ENCODE measurements at regions of chr2 and their contacts with region 1.

Region 1: DNA sequence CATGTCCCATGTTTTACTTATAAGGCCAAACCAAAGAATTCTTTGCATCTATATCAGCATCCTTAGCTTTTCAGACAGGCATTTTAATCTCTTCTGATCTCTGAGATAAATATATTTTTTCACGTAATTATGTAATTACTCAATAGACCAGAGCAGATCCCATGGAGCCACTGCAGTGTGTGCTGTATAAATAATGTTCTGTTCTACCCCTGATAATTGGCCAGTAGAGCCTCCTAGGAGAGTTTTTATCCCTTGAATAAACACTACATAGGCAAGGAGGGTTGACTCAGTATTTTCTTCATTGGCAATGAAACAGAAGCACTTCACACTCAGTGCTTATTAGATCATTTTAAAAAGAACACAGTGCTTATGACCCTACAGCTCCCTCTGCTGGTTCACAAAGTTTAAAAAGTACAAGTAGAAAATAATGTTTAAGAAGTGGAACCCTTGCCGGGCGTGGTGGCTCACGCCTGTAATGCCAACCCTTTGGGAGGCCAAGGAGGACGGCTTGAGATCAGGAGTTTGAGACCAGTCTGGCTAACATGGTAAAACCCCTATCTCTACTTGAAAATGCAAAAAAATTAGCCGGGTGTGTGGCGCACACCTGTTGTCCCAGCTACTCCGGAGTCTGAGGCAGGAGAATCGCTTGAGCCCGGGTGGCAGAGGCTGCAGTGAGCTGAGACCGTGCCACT is 91.9 kb downstream of the PPP1R1C start:
- DNase-seq: peak; percentile 95
- ATAC-seq: peak; percentile 94
- H3K4me3 ChIP-seq: no peak overlapping the region
- H3K27ac ChIP-seq: peak overlapping the region; percentile 73
- H3K4me1 ChIP-seq: peaks cover 2% of the 10 kb centered on the region; the same call in 1 of the 2 replicates
- H3K27me3 ChIP-seq: no peaks in the 10 kb centered on the region
- CTCF ChIP-seq: peak; percentile 82
- POLR2A ChIP-seq: no peak
- RAD21 ChIP-seq: peak; percentile 87

Region 2: GRCh38 chr2:181738074-181738473 is 339.5 kb before region 1 on chr2:
- CTCF ChIA-PET with region 1: interaction called, 12 read pairs
- POLR2A ChIA-PET with region 1: no interaction called
- dilution Hi-C with region 1: no loop called
- in situ Hi-C with region 1: loop called (anchors 5 kb)
- intact Hi-C with region 1: loop called (anchors 1 kb)
- DNase-seq: peak; percentile 28
- ATAC-seq: no peak
- H3K4me3 ChIP-seq: no peak overlapping the region
- H3K27ac ChIP-seq: no peak overlapping the region
- H3K4me1 ChIP-seq: no peaks in the 10 kb centered on the region; the same call in 1 of the 2 replicates
- H3K27me3 ChIP-seq: no peaks in the 10 kb centered on the region
- CTCF ChIP-seq: peak; percentile 38
- POLR2A ChIP-seq: no peak
- RAD21 ChIP-seq: peak; percentile 40

Region 3: DNA sequence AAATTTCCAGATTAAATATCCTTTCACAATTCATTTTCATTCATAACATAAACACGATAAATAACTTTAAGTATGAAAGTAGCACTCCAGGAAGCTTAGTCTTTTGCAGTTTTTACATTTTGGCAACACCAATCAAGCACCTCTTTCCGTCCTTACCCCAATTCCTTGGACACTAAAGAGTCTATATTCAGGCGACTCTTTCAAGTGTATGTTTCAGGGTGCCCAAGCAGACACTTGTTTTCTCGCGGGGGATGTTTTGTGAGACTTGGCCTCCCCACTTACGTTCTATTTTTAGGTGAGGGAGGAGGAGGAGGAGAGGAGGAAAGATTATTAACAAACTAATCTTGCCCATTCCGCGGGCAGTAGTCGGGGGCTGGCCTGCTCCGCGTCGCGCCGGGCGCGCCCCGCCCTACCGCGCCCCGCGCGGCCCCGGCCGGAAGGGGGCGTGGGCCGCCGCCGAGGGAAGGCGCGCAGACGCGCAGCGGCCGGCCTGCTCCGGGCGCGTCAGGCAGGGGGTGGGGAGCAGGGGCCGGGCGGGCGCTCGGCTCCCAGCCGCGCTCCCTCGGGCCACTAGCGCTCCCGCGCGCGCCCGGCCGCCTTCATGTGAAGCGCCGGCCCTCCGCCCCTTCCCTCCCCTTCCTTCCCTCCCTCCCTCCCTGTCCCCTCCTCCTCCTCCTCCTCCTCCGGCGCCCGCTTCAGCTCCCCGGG is 186.2 kb before region 1 on chr2 and contains the start of gene ITPRID2:
- CTCF ChIA-PET with region 1: no interaction called
- POLR2A ChIA-PET with region 1: no interaction called
- dilution Hi-C with region 1: no loop called
- in situ Hi-C with region 1: no loop called
- intact Hi-C with region 1: loop called (anchors 1 kb)
- DNase-seq: peak; percentile 89
- ATAC-seq: peak; percentile 97
- H3K4me3 ChIP-seq: peak within 1 kb of the TSS; percentile 98
- H3K27ac ChIP-seq: peak within 1 kb of the TSS; percentile 98
- H3K4me1 ChIP-seq: peaks cover 3% of the 10 kb centered on the region; the same call in 1 of the 2 replicates
- H3K27me3 ChIP-seq: no peaks in the 10 kb centered on the region
- CTCF ChIP-seq: peak; percentile 44; the same call in 1 of the 2 replicates
- POLR2A ChIP-seq: no peak
- RAD21 ChIP-seq: no peak
- total RNA-seq, gene ITPRID2: 168 and 187 TPM in 2 replicates

Region 4: DNA sequence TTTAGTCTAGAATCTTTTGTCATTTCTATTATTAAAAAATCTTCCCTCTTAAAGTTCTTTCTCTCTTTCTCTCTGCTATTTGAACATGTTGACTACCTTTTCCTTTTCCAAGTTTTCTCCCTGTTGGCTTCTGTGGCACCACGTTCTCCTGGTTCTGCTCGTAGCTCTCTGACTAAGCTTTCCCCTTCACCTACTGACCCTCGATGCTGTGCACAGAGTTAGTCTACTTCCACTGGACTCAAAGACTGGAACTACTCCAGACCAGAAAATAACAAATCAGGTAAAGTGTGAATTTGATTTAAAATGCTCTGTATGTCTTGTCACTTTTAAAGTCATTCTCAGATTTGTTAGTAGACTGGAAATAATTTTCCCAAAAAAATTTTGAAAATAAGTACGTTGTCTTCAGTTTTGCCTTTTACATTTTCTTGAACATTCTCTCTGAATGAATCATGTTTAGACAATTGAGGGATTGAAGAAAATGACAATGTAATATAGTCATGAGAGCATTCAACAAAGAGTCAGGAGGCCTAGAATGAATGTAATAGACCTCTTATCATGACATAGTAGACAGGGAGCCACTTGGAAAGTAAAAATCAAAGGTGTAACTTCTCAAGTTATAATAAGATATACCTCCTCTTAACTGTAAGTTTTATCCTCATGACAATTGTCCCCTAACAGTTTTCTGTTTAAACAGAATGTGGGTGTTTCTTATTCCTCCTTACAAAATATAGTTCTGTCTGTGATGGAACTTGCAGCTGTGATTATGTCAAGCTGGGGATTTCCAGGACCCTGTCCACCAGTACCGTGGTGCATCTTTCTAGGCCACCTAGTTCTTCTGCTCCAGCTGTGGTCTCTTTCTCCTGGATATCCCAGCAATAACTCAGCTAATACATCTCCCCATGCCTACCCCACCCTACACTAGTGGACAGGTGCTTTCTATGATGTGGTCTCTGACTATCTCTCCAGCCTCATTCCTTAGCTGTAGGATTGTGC is 160.6 kb before region 1 on chr2:
- CTCF ChIA-PET with region 1: interaction called, 3 read pairs
- POLR2A ChIA-PET with region 1: no interaction called
- dilution Hi-C with region 1: no loop called
- in situ Hi-C with region 1: no loop called
- intact Hi-C with region 1: loop called (anchors 5 kb)
- DNase-seq: peak; percentile 69
- ATAC-seq: peak; percentile 54
- H3K4me3 ChIP-seq: no peak overlapping the region
- H3K27ac ChIP-seq: peak overlapping the region; percentile 6; the same call in 1 of the 2 replicates
- H3K4me1 ChIP-seq: peaks cover 8% of the 10 kb centered on the region
- H3K27me3 ChIP-seq: no peaks in the 10 kb centered on the region
- CTCF ChIP-seq: no peak
- POLR2A ChIP-seq: no peak
- RAD21 ChIP-seq: no peak

Region 5: DNA sequence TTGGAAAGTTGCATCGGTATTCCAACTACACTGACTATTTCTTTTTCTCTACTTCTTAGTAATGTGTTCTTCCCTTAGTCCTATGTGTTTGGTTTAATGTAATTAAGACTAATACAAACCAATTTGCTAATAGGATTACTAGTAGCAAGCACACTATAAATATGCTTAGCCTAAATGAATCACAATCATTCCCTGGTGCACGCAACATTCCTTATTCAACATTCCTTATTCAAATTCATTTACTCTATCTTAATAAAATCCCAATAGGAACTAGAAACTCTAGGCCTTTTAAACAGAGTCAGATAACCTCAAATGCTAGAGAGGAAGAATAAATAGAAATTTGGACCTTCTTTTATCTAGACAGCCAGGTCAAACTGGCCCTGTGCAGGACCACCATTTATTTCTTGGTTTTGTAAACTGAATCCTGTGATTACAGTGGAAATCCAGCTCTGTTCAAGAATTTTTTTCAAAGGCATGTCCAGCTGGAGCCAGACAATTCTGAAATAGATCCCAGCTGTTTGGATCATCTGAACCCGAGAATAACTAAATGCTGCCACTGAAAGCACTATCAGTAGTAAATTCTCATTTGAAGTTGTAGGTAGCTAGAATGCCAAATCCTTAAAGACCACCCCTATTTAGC is 11.2 kb after region 1 on chr2:
- CTCF ChIA-PET with region 1: interaction called, 19 read pairs
- POLR2A ChIA-PET with region 1: no interaction called
- dilution Hi-C with region 1: no loop called
- in situ Hi-C with region 1: no loop called
- intact Hi-C with region 1: loop called (anchors 1 kb)
- DNase-seq: peak; percentile 45
- ATAC-seq: peak; percentile 73
- H3K4me3 ChIP-seq: no peak overlapping the region
- H3K27ac ChIP-seq: peak overlapping the region; percentile 95
- H3K4me1 ChIP-seq: peaks cover 7% of the 10 kb centered on the region
- H3K27me3 ChIP-seq: no peaks in the 10 kb centered on the region
- CTCF ChIP-seq: no peak
- POLR2A ChIP-seq: no peak
- RAD21 ChIP-seq: no peak

Region 6: GRCh38 chr2:182324665-182325064 is 247.1 kb after region 1 on chr2:
- CTCF ChIA-PET with region 1: no interaction called
- POLR2A ChIA-PET with region 1: no interaction called
- dilution Hi-C with region 1: no loop called
- in situ Hi-C with region 1: no loop called
- intact Hi-C with region 1: no loop called
- DNase-seq: peak; percentile 70
- ATAC-seq: peak; percentile 60
- H3K4me3 ChIP-seq: no peak overlapping the region
- H3K27ac ChIP-seq: no peak overlapping the region
- H3K4me1 ChIP-seq: peaks cover 2% of the 10 kb centered on the region; the same call in 1 of the 2 replicates
- H3K27me3 ChIP-seq: no peaks in the 10 kb centered on the region
- CTCF ChIP-seq: no peak
- POLR2A ChIP-seq: no peak
- RAD21 ChIP-seq: no peak

Region 7: DNA sequence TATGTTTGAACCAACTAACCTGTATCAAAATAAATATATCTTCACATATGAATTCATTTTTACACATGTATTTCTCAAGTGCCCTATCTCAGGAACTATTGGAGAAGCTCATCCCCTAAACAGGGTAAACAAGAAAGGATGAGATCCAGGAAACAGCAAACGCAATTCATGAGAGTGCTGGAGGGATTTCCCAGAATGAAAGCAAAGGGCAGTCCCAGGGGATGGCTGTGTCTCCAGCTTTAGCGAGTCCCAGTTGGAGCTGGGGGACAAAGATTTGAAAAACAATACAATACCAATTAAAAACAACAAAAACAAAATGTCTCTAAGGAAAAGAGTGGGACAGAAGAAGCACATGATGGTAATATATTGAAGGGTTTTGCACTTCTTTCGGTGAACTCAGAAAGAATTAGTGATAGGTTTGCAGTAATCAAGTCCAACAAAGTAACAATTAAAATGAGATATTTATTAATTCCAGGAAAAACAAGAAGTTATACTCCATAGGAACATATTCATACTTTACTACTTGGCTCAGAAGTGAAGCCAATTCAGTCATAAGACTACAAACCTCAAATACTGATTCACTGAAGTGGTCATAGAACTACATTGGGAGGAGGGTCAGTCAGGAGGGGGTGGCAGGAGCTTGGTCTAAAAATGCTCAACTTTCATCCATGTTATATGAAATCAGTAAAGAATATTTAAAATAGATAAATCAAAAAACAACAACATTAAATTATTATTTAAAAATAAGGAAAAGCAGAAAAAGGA is 422.3 kb after region 1 on chr2:
- CTCF ChIA-PET with region 1: no interaction called
- POLR2A ChIA-PET with region 1: no interaction called
- dilution Hi-C with region 1: no loop called
- in situ Hi-C with region 1: no loop called
- intact Hi-C with region 1: no loop called
- DNase-seq: peak; percentile 33
- ATAC-seq: no peak
- H3K4me3 ChIP-seq: no peak overlapping the region
- H3K27ac ChIP-seq: no peak overlapping the region
- H3K4me1 ChIP-seq: peaks cover 5% of the 10 kb centered on the region
- H3K27me3 ChIP-seq: no peaks in the 10 kb centered on the region
- CTCF ChIP-seq: no peak
- POLR2A ChIP-seq: no peak
- RAD21 ChIP-seq: no peak